ENCODE measurements at regions of chr4 and their contacts with region 1.

Region 1: GRCh38 chr4:108030332-108030731 is 40.6 kb downstream of the HADH start:
- DNase-seq: peak; percentile 43 to 87 (median 73)
- ATAC-seq: peak; percentile 84
- H3K4me3 ChIP-seq: no peak overlapping the region
- H3K4me3 Mint-ChIP-seq: peak overlapping the region; percentile 60
- H3K27ac ChIP-seq: peak overlapping the region; percentile 24 to 55
- H3K27ac Mint-ChIP-seq: peak overlapping the region; percentile 92
- H3K4me1 ChIP-seq: peaks cover 63% of the 10 kb centered on the region
- H3K4me1 Mint-ChIP-seq: peaks cover 64% of the 10 kb centered on the region
- H3K27me3 ChIP-seq: no peaks in the 10 kb centered on the region
- H3K27me3 Mint-ChIP-seq: no peaks in the 10 kb centered on the region
- CTCF ChIP-seq: peak; percentile 75

Region 2: GRCh38 chr4:108018040-108018883 is 12.1 kb before region 1 on chr4:
- CTCF ChIA-PET with region 1: interaction called, 64 read pairs
- POLR2A ChIA-PET with region 1: interaction called, 7 read pairs
- intact Hi-C with region 1: loop called in 1 of 2 experiments (anchors 1 kb)
- DNase-seq: peak; percentile 61 to 90 (median 81)
- ATAC-seq: peak; percentile 88
- H3K4me3 ChIP-seq: no peak overlapping the region
- H3K4me3 Mint-ChIP-seq: no peak overlapping the region
- H3K27ac ChIP-seq: no peak overlapping the region
- H3K27ac Mint-ChIP-seq: no peak overlapping the region
- H3K4me1 ChIP-seq: peaks cover 4% of the 10 kb centered on the region
- H3K4me1 Mint-ChIP-seq: peaks cover 15% of the 10 kb centered on the region
- H3K27me3 ChIP-seq: no peaks in the 10 kb centered on the region
- H3K27me3 Mint-ChIP-seq: no peaks in the 10 kb centered on the region
- CTCF ChIP-seq: peak; percentile 82

Region 3: GRCh38 chr4:108060164-108060563 is 29.8 kb after region 1 on chr4:
- CTCF ChIA-PET with region 1: interaction called, 11 read pairs
- POLR2A ChIA-PET with region 1: interaction called, 8 read pairs
- intact Hi-C with region 1: loop called in 1 of 2 experiments (anchors 5 kb)
- DNase-seq: peak in 2 of 9 experiments; percentile 33 to 51
- ATAC-seq: no peak
- H3K4me3 ChIP-seq: no peak overlapping the region
- H3K4me3 Mint-ChIP-seq: no peak overlapping the region
- H3K27ac ChIP-seq: no peak overlapping the region
- H3K27ac Mint-ChIP-seq: peak overlapping the region; percentile 81
- H3K4me1 ChIP-seq: peaks cover 92% of the 10 kb centered on the region
- H3K4me1 Mint-ChIP-seq: peaks cover 87% of the 10 kb centered on the region
- H3K27me3 ChIP-seq: no peaks in the 10 kb centered on the region
- H3K27me3 Mint-ChIP-seq: no peaks in the 10 kb centered on the region
- CTCF ChIP-seq: no peak

Region 4: DNA sequence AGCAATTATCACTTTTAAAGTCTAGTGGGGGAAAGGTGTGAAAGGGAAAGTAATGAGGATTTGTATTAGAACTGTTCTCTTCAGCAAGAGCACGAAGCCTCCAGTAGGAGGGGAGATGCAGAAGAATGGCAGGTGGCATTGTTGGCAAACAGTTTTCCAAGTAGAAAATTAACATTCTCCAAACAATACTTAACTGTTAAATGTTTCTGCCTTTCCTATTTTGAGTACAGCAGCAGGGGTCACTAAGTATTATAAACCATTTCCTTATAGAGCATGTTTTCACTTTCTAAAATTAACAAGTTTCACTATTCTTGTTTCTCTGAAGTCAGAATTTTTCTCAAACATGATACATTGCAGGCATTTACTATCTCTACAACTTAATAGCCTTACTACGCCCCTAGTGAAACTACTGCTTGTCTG is 79.7 kb after region 1 on chr4:
- CTCF ChIA-PET with region 1: interaction called, 8 read pairs
- POLR2A ChIA-PET with region 1: interaction called, 4 read pairs
- intact Hi-C with region 1: loop called (anchors 5 to 10 kb)
- DNase-seq: no peak
- ATAC-seq: no peak
- H3K4me3 ChIP-seq: peak overlapping the region in 1 of 2 experiments; percentile 7
- H3K4me3 Mint-ChIP-seq: peak overlapping the region; percentile 61
- H3K27ac ChIP-seq: peak overlapping the region; percentile 6 to 19
- H3K27ac Mint-ChIP-seq: peak overlapping the region; percentile 98
- H3K4me1 ChIP-seq: peaks cover 98% of the 10 kb centered on the region
- H3K4me1 Mint-ChIP-seq: peaks cover 86% of the 10 kb centered on the region
- H3K27me3 ChIP-seq: no peaks in the 10 kb centered on the region
- H3K27me3 Mint-ChIP-seq: no peaks in the 10 kb centered on the region
- CTCF ChIP-seq: no peak

Region 5: GRCh38 chr4:108155373-108155772 is 125.0 kb after region 1 on chr4:
- CTCF ChIA-PET with region 1: interaction called, 9 read pairs
- POLR2A ChIA-PET with region 1: interaction called, 9 read pairs
- intact Hi-C with region 1: loop called in 1 of 2 experiments (anchors 2 kb)
- DNase-seq: peak in 5 of 9 experiments; percentile 43 to 81 (median 58)
- ATAC-seq: peak; percentile 66
- H3K4me3 ChIP-seq: peak overlapping the region in 1 of 2 experiments; percentile 29
- H3K4me3 Mint-ChIP-seq: peak overlapping the region; percentile 66
- H3K27ac ChIP-seq: peak overlapping the region in 1 of 2 experiments; percentile 21
- H3K27ac Mint-ChIP-seq: peak overlapping the region; percentile 88
- H3K4me1 ChIP-seq: peaks cover 85% of the 10 kb centered on the region
- H3K4me1 Mint-ChIP-seq: peaks cover 84% of the 10 kb centered on the region
- H3K27me3 ChIP-seq: peaks cover 0 to 4% of the 10 kb centered on the region in 2 experiments
- H3K27me3 Mint-ChIP-seq: no peaks in the 10 kb centered on the region
- CTCF ChIP-seq: peak; percentile 35

Region 6: GRCh38 chr4:108492816-108493595 is 462.7 kb after region 1 on chr4:
- CTCF ChIA-PET with region 1: interaction called, 9 read pairs
- POLR2A ChIA-PET with region 1: no interaction called
- intact Hi-C with region 1: loop called in 1 of 2 experiments (anchors 1 kb)
- DNase-seq: peak in 5 of 9 experiments; percentile 15 to 58 (median 38)
- ATAC-seq: no peak
- H3K4me3 ChIP-seq: no peak overlapping the region
- H3K4me3 Mint-ChIP-seq: no peak overlapping the region
- H3K27ac ChIP-seq: no peak overlapping the region
- H3K27ac Mint-ChIP-seq: no peak overlapping the region
- H3K4me1 ChIP-seq: no peaks in the 10 kb centered on the region
- H3K4me1 Mint-ChIP-seq: no peaks in the 10 kb centered on the region
- H3K27me3 ChIP-seq: no peaks in the 10 kb centered on the region
- H3K27me3 Mint-ChIP-seq: no peaks in the 10 kb centered on the region
- CTCF ChIP-seq: peak; percentile 19

Region 7: DNA sequence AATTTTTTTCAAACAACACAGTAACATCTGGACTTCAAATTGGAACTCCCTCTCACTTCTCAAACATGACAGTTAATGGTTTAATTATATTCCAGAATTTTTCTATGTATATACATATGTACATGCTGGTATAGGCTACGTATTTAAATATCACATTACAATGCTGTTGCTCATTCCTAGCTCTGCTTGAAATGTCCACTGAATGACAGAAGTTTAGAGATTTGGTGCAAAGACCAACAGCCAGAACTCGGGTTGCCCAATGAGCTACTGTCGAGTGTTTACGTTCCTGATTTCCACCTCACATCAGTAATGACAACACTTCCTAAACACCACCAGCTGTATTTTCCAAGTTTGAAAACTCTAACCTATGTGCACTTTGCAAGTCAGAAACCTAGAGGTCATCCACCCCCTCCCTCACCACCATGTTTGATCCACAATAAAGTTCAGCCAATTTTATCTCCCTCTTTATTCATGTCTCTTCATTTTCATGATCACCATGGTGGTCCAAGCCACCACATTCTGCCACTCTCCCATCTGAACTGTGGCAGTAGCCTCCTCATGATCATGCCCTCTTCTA is 540.7 kb after region 1 on chr4:
- CTCF ChIA-PET with region 1: interaction called, 48 read pairs
- POLR2A ChIA-PET with region 1: interaction called, 5 read pairs
- intact Hi-C with region 1: loop called (anchors 1 kb)
- DNase-seq: no peak
- ATAC-seq: no peak
- H3K4me3 ChIP-seq: no peak overlapping the region
- H3K4me3 Mint-ChIP-seq: no peak overlapping the region
- H3K27ac ChIP-seq: no peak overlapping the region
- H3K27ac Mint-ChIP-seq: no peak overlapping the region
- H3K4me1 ChIP-seq: peaks cover 26% of the 10 kb centered on the region
- H3K4me1 Mint-ChIP-seq: peaks cover 31% of the 10 kb centered on the region
- H3K27me3 ChIP-seq: peaks cover 0 to 2% of the 10 kb centered on the region in 2 experiments
- H3K27me3 Mint-ChIP-seq: no peaks in the 10 kb centered on the region
- CTCF ChIP-seq: no peak

Region 8: DNA sequence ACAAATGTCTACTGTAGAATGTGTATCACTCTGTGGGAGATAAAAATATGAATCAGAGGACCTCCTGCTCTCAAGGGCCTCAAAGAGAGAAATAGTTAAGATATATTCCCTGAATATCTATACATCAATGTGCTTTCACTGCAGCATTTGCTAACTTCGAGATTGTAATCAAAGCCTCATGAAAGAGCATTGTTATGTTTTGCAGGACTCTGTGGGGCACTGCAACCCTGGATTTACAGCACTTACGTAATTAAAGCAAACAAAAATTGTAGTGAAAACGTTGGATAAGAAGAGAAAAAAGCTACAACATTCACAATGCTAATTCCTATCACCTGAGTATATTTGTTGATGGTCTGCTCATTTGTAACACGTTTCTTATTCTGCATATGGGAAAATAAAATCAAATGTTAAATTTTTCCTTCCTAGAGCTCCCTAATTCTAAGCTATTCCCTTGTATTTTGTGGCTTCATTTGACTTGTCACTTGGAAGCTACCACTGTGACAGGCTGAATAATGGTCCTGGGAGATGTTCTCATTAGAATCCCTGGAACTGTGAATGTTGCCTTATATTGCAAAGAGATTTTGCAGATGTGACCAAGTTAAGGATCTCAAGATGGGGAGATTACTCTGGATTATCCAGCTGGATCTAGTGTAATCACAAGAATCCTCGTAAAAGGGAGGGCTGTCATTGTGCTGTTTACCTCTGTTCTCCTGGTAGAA is 684.7 kb after region 1 on chr4:
- CTCF ChIA-PET with region 1: no interaction called
- POLR2A ChIA-PET with region 1: no interaction called
- intact Hi-C with region 1: no loop called
- DNase-seq: no peak
- ATAC-seq: no peak
- H3K4me3 ChIP-seq: no peak overlapping the region
- H3K4me3 Mint-ChIP-seq: no peak overlapping the region
- H3K27ac ChIP-seq: no peak overlapping the region
- H3K27ac Mint-ChIP-seq: no peak overlapping the region
- H3K4me1 ChIP-seq: no peaks in the 10 kb centered on the region
- H3K4me1 Mint-ChIP-seq: no peaks in the 10 kb centered on the region
- H3K27me3 ChIP-seq: no peaks in the 10 kb centered on the region
- H3K27me3 Mint-ChIP-seq: no peaks in the 10 kb centered on the region
- CTCF ChIP-seq: no peak

Measured in CD8-positive, alpha-beta T cell (primary cell).